ENCODE measurements at regions of chr6 and their contacts with region 1.

Region 1: GRCh38 chr6:30541515-30542403 is 14.5 kb downstream of the GNL1 start:
- DNase-seq: peak; percentile 89
- H3K4me3 Mint-ChIP-seq: peak overlapping the region; percentile 71
- H3K27ac Mint-ChIP-seq: peak overlapping the region; percentile 20
- H3K4me1 Mint-ChIP-seq: peaks cover 41% of the 10 kb centered on the region
- H3K27me3 Mint-ChIP-seq: no peaks in the 10 kb centered on the region

Region 2: GRCh38 chr6:30061092-30061857 is 480.5 kb before region 1 on chr6 and contains the start of gene POLR1H:
- CTCF ChIA-PET with region 1: no interaction called
- intact Hi-C with region 1: no loop called
- DNase-seq: peak; percentile 94
- H3K4me3 Mint-ChIP-seq: peak within 1 kb of the TSS; percentile 98
- H3K27ac Mint-ChIP-seq: peak within 1 kb of the TSS; percentile 98
- H3K4me1 Mint-ChIP-seq: peaks cover 34% of the 10 kb centered on the region
- H3K27me3 Mint-ChIP-seq: no peaks in the 10 kb centered on the region
- total RNA-seq, gene POLR1H: 74.6 to 77.8 TPM

Region 3: GRCh38 chr6:30483677-30484279 is 58.0 kb before region 1 on chr6:
- CTCF ChIA-PET with region 1: interaction called, 367 read pairs
- intact Hi-C with region 1: loop called (anchors 1 kb)
- DNase-seq: peak; percentile 54
- H3K4me3 Mint-ChIP-seq: no peak overlapping the region
- H3K27ac Mint-ChIP-seq: no peak overlapping the region
- H3K4me1 Mint-ChIP-seq: peaks cover 44% of the 10 kb centered on the region
- H3K27me3 Mint-ChIP-seq: peaks cover 35% of the 10 kb centered on the region

Region 4: DNA sequence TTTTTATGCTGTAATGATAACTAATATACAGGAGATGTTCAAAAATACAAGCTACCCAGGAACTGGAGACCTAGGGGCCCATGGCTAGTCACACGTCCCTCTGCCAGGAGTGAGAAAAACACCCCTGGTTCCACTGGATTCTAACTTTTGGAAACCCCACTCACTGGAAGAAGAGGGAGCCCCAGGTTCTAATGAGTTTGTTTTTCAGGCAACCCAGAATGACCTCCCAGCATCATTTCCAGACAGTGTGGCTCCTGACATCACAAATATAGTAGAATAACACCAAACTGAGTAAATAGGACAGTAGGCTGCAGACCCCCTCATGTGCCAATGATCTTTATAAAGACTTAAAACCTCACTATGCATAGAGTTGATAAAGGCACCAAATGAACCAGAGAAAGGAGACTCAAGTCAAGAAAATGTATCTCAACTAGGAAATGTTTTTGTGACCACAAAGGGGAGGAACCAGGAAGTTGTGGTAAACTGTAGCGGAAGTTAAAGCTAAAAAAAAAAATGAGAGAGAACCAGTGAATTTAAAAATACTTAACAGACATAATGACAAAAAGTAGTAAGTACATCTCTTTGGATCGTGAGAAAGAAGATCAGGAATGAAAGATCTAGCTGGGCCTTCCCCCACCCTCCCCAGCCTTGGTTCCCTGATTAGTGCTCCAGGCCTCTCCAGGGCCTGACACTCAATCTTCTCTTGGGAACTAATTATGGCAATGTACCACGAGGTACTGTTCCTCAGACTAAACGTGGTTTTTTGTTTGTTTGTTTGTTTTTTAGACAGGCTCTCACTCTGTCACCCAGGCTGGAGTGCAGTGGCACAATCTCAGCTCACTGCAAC is 32.6 kb before region 1 on chr6:
- CTCF ChIA-PET with region 1: interaction called, 21 read pairs
- intact Hi-C with region 1: no loop called
- DNase-seq: peak; percentile 42
- H3K4me3 Mint-ChIP-seq: peak overlapping the region; percentile 60
- H3K27ac Mint-ChIP-seq: peak overlapping the region; percentile 98
- H3K4me1 Mint-ChIP-seq: peaks cover 69% of the 10 kb centered on the region
- H3K27me3 Mint-ChIP-seq: no peaks in the 10 kb centered on the region

Region 5: DNA sequence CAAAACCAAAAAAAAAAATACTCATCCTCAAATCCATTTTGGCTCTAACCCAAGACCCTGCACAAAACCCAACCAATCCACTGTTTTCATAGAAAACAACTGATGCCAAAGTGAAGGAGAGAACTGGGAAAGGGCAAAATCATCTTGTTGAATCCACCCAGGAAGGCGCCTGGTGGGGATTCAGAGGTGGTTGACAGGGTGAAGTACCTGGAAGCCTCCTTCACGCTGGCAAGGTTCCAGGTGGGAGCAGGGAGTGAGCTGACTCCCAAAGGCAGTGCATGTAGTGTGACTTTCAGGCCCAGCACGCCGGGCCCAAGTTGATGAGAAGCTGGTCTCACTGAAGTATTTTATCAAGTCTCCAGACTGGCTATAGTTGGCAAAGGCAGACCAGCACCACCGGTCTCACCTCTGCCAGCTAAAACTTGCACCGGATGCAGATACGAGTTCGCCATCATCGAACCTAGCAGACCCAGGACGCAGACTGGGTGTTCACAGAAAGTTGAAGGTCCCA is 58.7 kb after region 1 on chr6:
- CTCF ChIA-PET with region 1: interaction called, 39 read pairs
- intact Hi-C with region 1: loop called (anchors 1 kb)
- DNase-seq: no peak
- H3K4me3 Mint-ChIP-seq: no peak overlapping the region
- H3K27ac Mint-ChIP-seq: peak overlapping the region; percentile 37
- H3K4me1 Mint-ChIP-seq: peaks cover 9% of the 10 kb centered on the region
- H3K27me3 Mint-ChIP-seq: no peaks in the 10 kb centered on the region

Region 6: GRCh38 chr6:30877419-30878371 is 335.9 kb after region 1 on chr6:
- CTCF ChIA-PET with region 1: no interaction called
- intact Hi-C with region 1: loop called (anchors 1 kb)
- DNase-seq: peak; percentile 89
- H3K4me3 Mint-ChIP-seq: peak overlapping the region; percentile 68
- H3K27ac Mint-ChIP-seq: peak overlapping the region; percentile 84
- H3K4me1 Mint-ChIP-seq: peaks cover 23% of the 10 kb centered on the region
- H3K27me3 Mint-ChIP-seq: no peaks in the 10 kb centered on the region

Region 7: DNA sequence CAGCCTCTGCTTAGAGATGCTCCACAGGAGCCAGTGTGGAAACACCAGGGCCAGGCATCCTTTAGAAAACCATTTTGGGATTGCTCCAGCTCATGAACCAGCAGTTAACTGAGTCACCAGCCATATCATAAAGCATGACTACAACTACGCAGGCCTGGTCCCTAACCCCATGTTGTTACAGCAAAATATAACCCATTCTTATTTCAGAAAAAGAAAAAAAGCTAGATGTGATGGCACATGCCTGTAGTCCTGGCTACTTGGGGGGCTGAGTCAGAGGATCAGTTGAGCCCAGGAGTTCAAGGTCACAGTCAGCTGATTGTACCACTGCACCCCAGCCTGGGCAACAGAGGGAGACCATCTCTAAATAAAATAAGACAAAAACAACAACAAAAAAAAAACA is 533.8 kb after region 1 on chr6:
- CTCF ChIA-PET with region 1: no interaction called
- intact Hi-C with region 1: no loop called
- DNase-seq: no peak
- H3K4me3 Mint-ChIP-seq: no peak overlapping the region
- H3K27ac Mint-ChIP-seq: no peak overlapping the region
- H3K4me1 Mint-ChIP-seq: peaks cover 8% of the 10 kb centered on the region
- H3K27me3 Mint-ChIP-seq: no peaks in the 10 kb centered on the region

Measured in activated naive CD4-positive, alpha-beta T cell treated with anti-CD3 and anti-CD28 coated beads for 36 hours (primary cell).